ENCODE measurements at regions of chr14 and their contacts with region 1.

Region 1: GRCh38 chr14:91286530-91286937 is 42.0 kb upstream of the GPR68 start:
- DNase-seq: peak; percentile 21
- ATAC-seq: peak; percentile 92
- H3K4me3 ChIP-seq: no peak overlapping the region
- H3K27ac ChIP-seq: no peak overlapping the region
- H3K4me1 ChIP-seq: no peaks in the 10 kb centered on the region
- H3K27me3 ChIP-seq: no peaks in the 10 kb centered on the region
- CTCF ChIP-seq: peak; percentile 69 to 86 (median 85); a peak in 5 of 6 replicates
- EP300 ChIP-seq: no peak
- POLR2A ChIP-seq: no peak
- RAD21 ChIP-seq: peak; percentile 84

Region 2: DNA sequence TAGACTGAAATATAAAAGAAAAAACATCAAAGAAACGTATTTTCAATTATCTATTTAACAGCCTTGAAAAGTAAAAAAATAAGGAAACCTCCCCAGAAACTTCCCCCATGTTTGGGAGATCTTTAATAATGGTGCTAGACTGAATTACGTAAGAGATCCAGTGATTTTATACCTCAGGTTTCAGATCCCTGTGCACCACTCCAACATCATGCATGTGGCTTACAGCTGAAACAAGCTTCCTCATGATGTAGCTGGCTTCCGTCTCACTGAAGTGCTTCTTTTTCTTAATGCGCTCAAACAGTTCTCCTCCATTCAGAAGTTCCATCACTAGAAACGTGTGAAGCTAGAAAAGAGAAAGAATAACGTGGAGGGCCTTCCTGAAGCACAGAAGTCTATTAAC is 392.3 kb before region 1 on chr14:
- CTCF ChIA-PET with region 1: interaction called, 5 read pairs
- POLR2A ChIA-PET with region 1: no interaction called
- RAD21 ChIA-PET with region 1: no interaction called
- SMC1A ChIA-PET with region 1: interaction called, 3 read pairs
- in situ Hi-C with region 1: loop called (anchors 5 kb)
- intact Hi-C with region 1: no loop called
- DNase-seq: no peak
- ATAC-seq: no peak
- H3K4me3 ChIP-seq: no peak overlapping the region
- H3K27ac ChIP-seq: no peak overlapping the region
- H3K4me1 ChIP-seq: no peaks in the 10 kb centered on the region
- H3K27me3 ChIP-seq: no peaks in the 10 kb centered on the region
- CTCF ChIP-seq: no peak
- EP300 ChIP-seq: no peak
- POLR2A ChIP-seq: no peak
- RAD21 ChIP-seq: no peak

Region 3: GRCh38 chr14:90983560-90983959 is 303.0 kb before region 1 on chr14:
- CTCF ChIA-PET with region 1: no interaction called
- POLR2A ChIA-PET with region 1: no interaction called
- RAD21 ChIA-PET with region 1: no interaction called
- SMC1A ChIA-PET with region 1: no interaction called
- in situ Hi-C with region 1: no loop called
- intact Hi-C with region 1: no loop called
- DNase-seq: no peak
- ATAC-seq: no peak
- H3K4me3 ChIP-seq: no peak overlapping the region
- H3K27ac ChIP-seq: no peak overlapping the region
- H3K4me1 ChIP-seq: peaks cover 14% of the 10 kb centered on the region
- H3K27me3 ChIP-seq: no peaks in the 10 kb centered on the region
- CTCF ChIP-seq: no peak
- EP300 ChIP-seq: no peak
- POLR2A ChIP-seq: no peak
- RAD21 ChIP-seq: no peak

Region 4: DNA sequence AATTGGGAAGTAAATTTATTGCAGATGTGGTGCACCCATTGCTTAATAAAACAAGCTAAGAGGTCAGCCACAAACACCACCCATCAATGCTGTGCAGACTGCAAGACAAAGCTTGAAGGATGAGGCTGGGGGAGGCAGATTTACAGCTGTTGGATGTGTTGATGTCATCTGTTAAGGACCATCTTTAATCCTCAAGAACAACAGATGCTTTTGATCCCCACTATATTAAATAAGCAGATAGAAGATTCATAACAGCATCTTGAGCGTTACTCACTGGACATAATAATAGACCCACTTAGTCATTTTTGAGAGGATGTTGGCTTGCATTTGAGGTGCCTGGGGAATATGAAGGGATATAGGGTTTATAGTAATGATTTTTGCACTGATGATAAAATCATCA is 100.8 kb before region 1 on chr14:
- CTCF ChIA-PET with region 1: interaction called, 12 read pairs
- POLR2A ChIA-PET with region 1: no interaction called
- RAD21 ChIA-PET with region 1: no interaction called
- SMC1A ChIA-PET with region 1: interaction called, 5 read pairs
- in situ Hi-C with region 1: no loop called
- intact Hi-C with region 1: no loop called
- DNase-seq: no peak
- ATAC-seq: no peak
- H3K4me3 ChIP-seq: no peak overlapping the region
- H3K27ac ChIP-seq: no peak overlapping the region
- H3K4me1 ChIP-seq: no peaks in the 10 kb centered on the region
- H3K27me3 ChIP-seq: no peaks in the 10 kb centered on the region
- CTCF ChIP-seq: no peak
- EP300 ChIP-seq: no peak
- POLR2A ChIP-seq: no peak
- RAD21 ChIP-seq: no peak

Region 5: DNA sequence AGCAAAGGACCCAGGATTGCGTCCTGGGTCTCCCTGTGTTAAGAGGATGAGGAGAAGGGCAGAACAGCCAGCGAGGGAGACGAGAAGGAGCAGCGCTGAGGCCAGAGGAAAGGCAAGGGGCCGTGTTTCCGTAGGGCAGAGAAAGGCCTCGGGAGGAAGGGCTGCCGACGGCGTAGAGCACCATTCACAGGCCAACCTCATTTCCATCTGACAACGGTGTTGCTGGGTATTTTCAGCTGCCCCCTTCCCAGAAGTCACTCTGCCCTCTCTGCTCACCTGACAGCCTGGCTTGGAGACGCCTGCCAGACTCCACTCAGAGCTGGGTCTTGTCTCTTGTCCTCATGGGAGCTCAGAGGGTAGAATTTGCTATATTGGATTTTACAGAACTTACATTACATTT is 93.5 kb before region 1 on chr14:
- CTCF ChIA-PET with region 1: interaction called, 17 read pairs
- POLR2A ChIA-PET with region 1: no interaction called
- RAD21 ChIA-PET with region 1: no interaction called
- SMC1A ChIA-PET with region 1: interaction called, 4 read pairs
- in situ Hi-C with region 1: no loop called
- intact Hi-C with region 1: no loop called
- DNase-seq: no peak
- ATAC-seq: no peak
- H3K4me3 ChIP-seq: no peak overlapping the region
- H3K27ac ChIP-seq: no peak overlapping the region
- H3K4me1 ChIP-seq: no peaks in the 10 kb centered on the region
- H3K27me3 ChIP-seq: no peaks in the 10 kb centered on the region
- CTCF ChIP-seq: no peak
- EP300 ChIP-seq: no peak
- POLR2A ChIP-seq: no peak
- RAD21 ChIP-seq: no peak

Region 6: GRCh38 chr14:91228112-91229004 is 58.2 kb before region 1 on chr14:
- CTCF ChIA-PET with region 1: interaction called, 3 read pairs
- POLR2A ChIA-PET with region 1: no interaction called
- RAD21 ChIA-PET with region 1: interaction called, 3 read pairs
- SMC1A ChIA-PET with region 1: interaction called, 3 read pairs
- in situ Hi-C with region 1: no loop called
- intact Hi-C with region 1: loop called (anchors 2 kb)
- DNase-seq: peak; percentile 86
- ATAC-seq: peak; percentile 89
- H3K4me3 ChIP-seq: 0 out of 2 replicates have a peak overlapping the region, but pooled peaks have one; percentile 4
- H3K27ac ChIP-seq: peak overlapping the region; percentile 92
- H3K4me1 ChIP-seq: peaks cover 53% of the 10 kb centered on the region
- H3K27me3 ChIP-seq: no peaks in the 10 kb centered on the region
- CTCF ChIP-seq: no peak
- EP300 ChIP-seq: peak; percentile 37 to 78; a peak in 2 of 4 replicates
- POLR2A ChIP-seq: peak; percentile 63
- RAD21 ChIP-seq: no peak

Region 7: GRCh38 chr14:91244501-91244901 is 42.0 kb before region 1 on chr14 and contains the start of gene GPR68:
- CTCF ChIA-PET with region 1: interaction called, 5 read pairs
- POLR2A ChIA-PET with region 1: no interaction called
- RAD21 ChIA-PET with region 1: no interaction called
- SMC1A ChIA-PET with region 1: interaction called, 11 read pairs
- in situ Hi-C with region 1: no loop called
- intact Hi-C with region 1: no loop called
- DNase-seq: no peak
- ATAC-seq: 0 out of 3 replicates have a peak, but pooled peaks have one; percentile 2
- H3K4me3 ChIP-seq: peak within 1 kb of the TSS; percentile 16
- H3K27ac ChIP-seq: peak within 1 kb of the TSS; percentile 86
- H3K4me1 ChIP-seq: peaks cover 32% of the 10 kb centered on the region
- H3K27me3 ChIP-seq: no peaks in the 10 kb centered on the region
- CTCF ChIP-seq: no peak
- EP300 ChIP-seq: no peak
- POLR2A ChIP-seq: no peak
- RAD21 ChIP-seq: no peak
- polyA plus RNA-seq, gene GPR68: 0.06 to 0.35 TPM

Region 8: DNA sequence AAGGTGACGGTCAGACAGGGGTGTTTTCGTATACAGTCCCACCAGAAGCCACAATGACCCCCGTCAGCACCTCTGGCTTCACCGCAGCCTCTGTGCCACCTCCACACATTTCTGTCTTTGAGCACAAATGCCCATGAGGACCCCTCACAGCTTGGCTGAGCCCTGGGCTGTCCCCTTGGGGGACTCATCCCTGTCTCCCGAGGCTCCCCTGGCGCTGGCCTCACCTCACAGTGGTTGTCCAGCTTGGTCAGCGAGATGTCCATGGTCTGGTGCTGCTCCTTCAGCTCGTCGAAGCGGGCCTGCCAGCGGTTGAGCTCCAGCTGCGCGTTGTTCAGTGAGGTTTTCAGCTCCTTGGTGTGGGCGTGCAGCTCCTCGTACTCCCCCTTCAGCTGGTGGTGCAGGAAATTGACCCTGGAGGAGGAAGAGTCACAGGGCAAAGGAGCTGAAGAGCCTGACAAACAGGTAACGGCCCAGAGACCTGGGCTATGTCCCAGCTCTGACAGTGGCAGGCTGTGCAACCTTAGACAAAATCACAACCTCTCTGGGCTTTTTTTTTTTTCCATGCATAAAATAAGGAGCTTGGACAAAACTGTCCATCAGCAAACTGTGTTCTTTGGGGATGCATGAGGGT is 10.7 kb after region 1 on chr14:
- CTCF ChIA-PET with region 1: interaction called, 10 read pairs
- POLR2A ChIA-PET with region 1: no interaction called
- RAD21 ChIA-PET with region 1: interaction called, 3 read pairs
- SMC1A ChIA-PET with region 1: interaction called, 3 read pairs
- in situ Hi-C with region 1: no loop called
- intact Hi-C with region 1: no loop called
- DNase-seq: no peak
- ATAC-seq: no peak
- H3K4me3 ChIP-seq: no peak overlapping the region
- H3K27ac ChIP-seq: no peak overlapping the region
- H3K4me1 ChIP-seq: peaks cover under 1% of the 10 kb centered on the region; the same call in 1 of the 2 replicates
- H3K27me3 ChIP-seq: no peaks in the 10 kb centered on the region
- CTCF ChIP-seq: no peak
- EP300 ChIP-seq: no peak
- POLR2A ChIP-seq: peak; percentile 36; the same call in 1 of the 2 replicates
- RAD21 ChIP-seq: no peak

Region 9: GRCh38 chr14:91332151-91332985 is 45.8 kb after region 1 on chr14:
- CTCF ChIA-PET with region 1: no interaction called
- POLR2A ChIA-PET with region 1: no interaction called
- RAD21 ChIA-PET with region 1: no interaction called
- SMC1A ChIA-PET with region 1: no interaction called
- in situ Hi-C with region 1: no loop called
- intact Hi-C with region 1: no loop called
- DNase-seq: no peak
- ATAC-seq: no peak
- H3K4me3 ChIP-seq: no peak overlapping the region
- H3K27ac ChIP-seq: no peak overlapping the region
- H3K4me1 ChIP-seq: peaks cover 39% of the 10 kb centered on the region
- H3K27me3 ChIP-seq: no peaks in the 10 kb centered on the region
- CTCF ChIP-seq: no peak
- EP300 ChIP-seq: no peak
- POLR2A ChIP-seq: no peak; the same call in 1 of the 2 replicates
- RAD21 ChIP-seq: no peak